Naive thymus-derived CD4-positive, alpha-beta T cell (primary cell): ENCODE measurements at regions of chr18 and their contacts with region 1.

Region 1: GRCh38 chr18:54983041-54983686 is 23.9 kb upstream of the CCDC68 start:
- DNase-seq: peak in 5 of 9 donors; percentile 20 to 40 (median 31)
- ATAC-seq: peak; percentile 74
- H3K4me3 ChIP-seq: no peak overlapping the region
- H3K4me3 Mint-ChIP-seq: no peak overlapping the region
- H3K27ac ChIP-seq: no peak overlapping the region
- H3K27ac Mint-ChIP-seq: no peak overlapping the region
- H3K4me1 ChIP-seq: no peaks in the 10 kb centered on the region
- H3K4me1 Mint-ChIP-seq: peaks cover 0 to 3% (median 0%) of the 10 kb centered on the region in 7 donors
- H3K27me3 ChIP-seq: no peaks in the 10 kb centered on the region
- H3K27me3 Mint-ChIP-seq: peaks cover 0 to 26% (median 4%) of the 10 kb centered on the region in 5 donors

Region 2: DNA sequence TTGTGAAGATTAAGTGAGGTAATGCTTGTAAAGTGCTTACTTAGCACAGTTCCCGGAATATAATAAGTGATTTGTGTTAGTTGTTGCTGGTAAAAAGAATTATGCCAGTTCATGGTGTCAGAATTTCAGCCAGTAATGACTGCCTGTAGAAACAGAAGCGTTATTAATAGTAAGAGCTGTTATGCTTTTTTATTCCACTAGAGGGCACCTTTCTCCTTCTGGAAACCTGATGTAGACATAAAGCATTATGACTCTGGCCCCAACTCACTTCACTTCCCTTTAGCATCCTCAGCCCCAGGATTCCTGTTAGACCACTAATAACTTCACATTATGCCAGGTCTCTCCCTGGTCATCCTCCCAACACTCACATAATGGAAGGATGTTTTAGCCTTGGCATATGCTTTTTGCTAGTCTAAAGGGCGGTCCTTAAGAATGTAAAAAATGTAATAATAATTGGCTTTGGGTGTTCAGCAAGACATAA is 590.6 kb before region 1 on chr18:
- CTCF ChIA-PET with region 1: no interaction called
- POLR2A ChIA-PET with region 1: no interaction called
- intact Hi-C with region 1: loop called in 1 of 2 experiments (anchors 1 kb)
- DNase-seq: peak in 7 of 9 donors; percentile 5 to 55 (median 39)
- ATAC-seq: peak; percentile 80
- H3K4me3 ChIP-seq: no peak overlapping the region
- H3K4me3 Mint-ChIP-seq: no peak overlapping the region
- H3K27ac ChIP-seq: no peak overlapping the region
- H3K27ac Mint-ChIP-seq: no peak overlapping the region
- H3K4me1 ChIP-seq: no peaks in the 10 kb centered on the region
- H3K4me1 Mint-ChIP-seq: peaks cover 0 to 37% (median 0%) of the 10 kb centered on the region in 7 donors
- H3K27me3 ChIP-seq: no peaks in the 10 kb centered on the region
- H3K27me3 Mint-ChIP-seq: peaks cover 9 to 29% (median 16%) of the 10 kb centered on the region in 5 donors

Region 3: GRCh38 chr18:54444319-54444914 is 538.7 kb before region 1 on chr18:
- CTCF ChIA-PET with region 1: no interaction called
- POLR2A ChIA-PET with region 1: no interaction called
- intact Hi-C with region 1: loop called (anchors 1 kb)
- DNase-seq: peak in 2 of 9 donors; percentile 11 to 31
- ATAC-seq: no peak
- H3K4me3 ChIP-seq: no peak overlapping the region
- H3K4me3 Mint-ChIP-seq: no peak overlapping the region
- H3K27ac ChIP-seq: no peak overlapping the region
- H3K27ac Mint-ChIP-seq: no peak overlapping the region
- H3K4me1 ChIP-seq: no peaks in the 10 kb centered on the region
- H3K4me1 Mint-ChIP-seq: no peaks in the 10 kb centered on the region
- H3K27me3 ChIP-seq: no peaks in the 10 kb centered on the region
- H3K27me3 Mint-ChIP-seq: peaks cover 12 to 50% (median 39%) of the 10 kb centered on the region in 5 donors

Region 4: DNA sequence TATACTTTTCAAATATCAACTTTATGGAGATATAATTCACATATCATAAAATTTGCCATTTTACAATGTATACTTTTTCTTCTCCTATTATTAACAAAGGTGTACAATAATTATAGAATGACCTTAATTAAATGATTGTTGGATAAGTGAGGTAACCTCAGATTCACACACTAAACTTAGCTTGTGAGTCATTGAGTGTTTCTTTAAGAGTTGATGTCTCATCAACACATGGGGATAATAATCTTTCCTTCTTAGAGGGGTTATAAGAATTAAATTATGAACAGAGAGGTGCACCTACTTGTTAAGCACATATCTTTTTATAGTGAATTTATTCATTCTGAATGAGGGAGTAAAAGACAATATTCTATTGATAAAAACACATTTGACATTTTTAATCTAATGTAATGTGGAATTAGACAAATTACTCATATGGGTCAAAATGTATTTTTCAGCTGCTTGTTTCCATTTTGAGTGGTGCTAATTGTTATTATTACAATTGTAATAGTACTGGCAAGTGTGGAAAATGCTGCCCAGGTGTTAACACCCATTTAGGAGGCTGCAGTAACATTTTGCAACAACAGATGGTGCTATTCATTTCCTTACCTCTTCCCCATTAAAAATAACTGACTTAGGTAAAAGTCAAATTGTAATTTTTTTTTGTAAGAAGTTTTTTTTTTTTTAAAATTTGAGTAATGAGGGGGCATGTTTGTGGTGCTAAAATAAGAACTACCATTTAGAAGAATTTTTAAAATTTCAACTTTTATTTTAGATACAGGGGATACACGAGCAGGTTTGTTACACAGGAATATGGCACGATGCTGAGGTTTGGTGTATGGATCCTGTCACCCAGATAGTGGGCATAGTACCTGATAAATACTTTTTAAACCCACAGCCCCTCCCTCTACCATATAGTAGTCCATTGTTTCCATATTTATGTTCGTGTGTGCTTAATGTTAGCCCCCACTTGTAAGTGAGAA is 424.3 kb before region 1 on chr18:
- CTCF ChIA-PET with region 1: interaction called, 3 read pairs
- POLR2A ChIA-PET with region 1: no interaction called
- intact Hi-C with region 1: loop called (anchors 1 kb)
- DNase-seq: peak in 3 of 9 donors; percentile 6 to 12 (median 7)
- ATAC-seq: no peak
- H3K4me3 ChIP-seq: no peak overlapping the region
- H3K4me3 Mint-ChIP-seq: no peak overlapping the region
- H3K27ac ChIP-seq: no peak overlapping the region
- H3K27ac Mint-ChIP-seq: no peak overlapping the region
- H3K4me1 ChIP-seq: no peaks in the 10 kb centered on the region
- H3K4me1 Mint-ChIP-seq: no peaks in the 10 kb centered on the region
- H3K27me3 ChIP-seq: no peaks in the 10 kb centered on the region
- H3K27me3 Mint-ChIP-seq: peaks cover 0 to 8% (median 0%) of the 10 kb centered on the region in 5 donors

Region 5: DNA sequence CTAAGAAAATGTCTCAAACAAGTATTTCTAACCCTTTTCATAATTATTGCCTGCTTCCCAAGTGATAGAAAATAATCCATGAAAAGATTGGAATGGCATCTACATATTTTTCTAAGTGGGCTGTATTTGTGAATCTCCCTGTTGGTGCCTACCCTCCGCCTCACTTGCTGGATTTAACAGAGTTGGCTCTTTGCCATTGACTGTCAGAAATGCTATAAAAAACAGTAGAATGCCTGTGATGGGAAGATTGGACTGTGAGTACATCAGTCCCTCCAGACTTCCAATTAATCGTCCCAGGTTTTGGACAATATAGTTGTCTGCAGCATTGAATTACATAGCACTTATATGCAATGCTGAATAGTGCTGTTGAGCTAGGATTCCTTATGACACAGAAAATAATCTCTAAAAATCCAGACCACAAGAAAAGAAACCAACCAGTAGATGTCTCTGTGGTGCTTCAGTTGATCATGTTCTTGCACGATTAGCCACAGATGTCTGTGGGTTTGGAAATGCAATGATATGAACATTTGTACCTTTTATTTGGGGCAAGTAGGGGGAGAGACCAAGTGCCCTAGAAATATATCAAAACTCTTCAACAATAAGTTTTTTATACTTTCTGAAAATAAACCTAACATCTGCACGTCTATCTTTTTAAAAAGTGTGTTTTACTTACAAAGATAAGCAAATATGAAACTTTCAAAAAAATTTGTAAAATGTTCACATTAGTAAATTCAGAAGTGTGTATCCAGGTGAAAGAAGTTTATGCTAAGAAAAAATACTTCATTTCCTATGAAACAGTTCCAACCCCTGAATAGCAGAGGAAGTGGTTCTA is 303.6 kb before region 1 on chr18:
- CTCF ChIA-PET with region 1: interaction called, 3 read pairs
- POLR2A ChIA-PET with region 1: no interaction called
- intact Hi-C with region 1: loop called (anchors 1 kb)
- DNase-seq: peak in 6 of 9 donors; percentile 1 to 49 (median 26)
- ATAC-seq: no peak
- H3K4me3 ChIP-seq: no peak overlapping the region
- H3K4me3 Mint-ChIP-seq: no peak overlapping the region
- H3K27ac ChIP-seq: no peak overlapping the region
- H3K27ac Mint-ChIP-seq: no peak overlapping the region
- H3K4me1 ChIP-seq: no peaks in the 10 kb centered on the region
- H3K4me1 Mint-ChIP-seq: no peaks in the 10 kb centered on the region
- H3K27me3 ChIP-seq: no peaks in the 10 kb centered on the region
- H3K27me3 Mint-ChIP-seq: peaks cover 0 to 30% (median 0%) of the 10 kb centered on the region in 5 donors

Region 6: DNA sequence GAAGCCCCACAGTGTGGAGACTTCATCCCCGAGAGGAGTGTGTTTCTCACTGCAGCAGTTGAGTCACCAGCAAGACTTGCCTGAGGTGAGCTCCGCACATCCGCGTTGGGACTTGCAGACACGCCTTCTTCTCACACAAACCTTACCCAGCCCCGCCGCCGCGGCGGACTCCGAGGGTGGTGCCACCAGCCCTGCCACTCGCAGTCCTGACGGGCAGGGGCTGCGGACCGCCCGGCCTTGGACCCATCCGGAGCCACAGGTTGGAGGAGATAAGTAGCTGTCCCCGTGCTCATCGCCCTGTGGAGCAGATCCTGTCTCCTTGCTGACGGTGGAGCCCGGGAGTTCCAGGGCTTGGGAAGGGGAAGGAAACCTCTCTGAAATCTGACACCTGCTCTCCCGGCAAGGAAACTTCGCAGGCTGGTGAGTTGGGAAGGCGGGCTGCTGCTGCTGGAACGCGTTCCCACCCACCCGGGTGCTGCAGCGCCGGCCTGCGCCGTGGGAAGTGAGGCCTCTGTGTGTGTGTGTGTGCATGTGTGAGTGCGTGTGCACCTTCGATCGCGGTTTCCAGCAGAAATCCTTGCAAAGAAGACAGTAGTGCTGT is 154.8 kb before region 1 on chr18 and contains the start of gene RAB27B:
- CTCF ChIA-PET with region 1: no interaction called
- POLR2A ChIA-PET with region 1: no interaction called
- intact Hi-C with region 1: loop called in 1 of 2 experiments (anchors 5 kb)
- DNase-seq: peak; percentile 41 to 68 (median 61)
- ATAC-seq: peak; percentile 96
- H3K4me3 ChIP-seq: peak within 1 kb of the TSS; percentile 72
- H3K4me3 Mint-ChIP-seq: peak within 1 kb of the TSS; percentile 87 to 95 (median 92)
- H3K27ac ChIP-seq: peak within 1 kb of the TSS; percentile 63
- H3K27ac Mint-ChIP-seq: peak within 1 kb of the TSS in 8 of 9 donors; percentile 60 to 87 (median 76)
- H3K4me1 ChIP-seq: no peaks in the 10 kb centered on the region
- H3K4me1 Mint-ChIP-seq: peaks cover 17 to 45% (median 24%) of the 10 kb centered on the region in 7 donors
- H3K27me3 ChIP-seq: no peaks in the 10 kb centered on the region
- H3K27me3 Mint-ChIP-seq: peaks cover 0 to 34% (median 0%) of the 10 kb centered on the region in 5 donors
- total RNA-seq, gene RAB27B: 1.3 to 6.4 (median 1.6) TPM

Region 7: GRCh38 chr18:54999016-54999415 is 15.9 kb after region 1 on chr18:
- CTCF ChIA-PET with region 1: no interaction called
- POLR2A ChIA-PET with region 1: no interaction called
- intact Hi-C with region 1: no loop called
- DNase-seq: no peak
- ATAC-seq: no peak
- H3K4me3 ChIP-seq: no peak overlapping the region
- H3K4me3 Mint-ChIP-seq: no peak overlapping the region
- H3K27ac ChIP-seq: no peak overlapping the region
- H3K27ac Mint-ChIP-seq: no peak overlapping the region
- H3K4me1 ChIP-seq: no peaks in the 10 kb centered on the region
- H3K4me1 Mint-ChIP-seq: no peaks in the 10 kb centered on the region
- H3K27me3 ChIP-seq: no peaks in the 10 kb centered on the region
- H3K27me3 Mint-ChIP-seq: peaks cover 0 to 17% (median 4%) of the 10 kb centered on the region in 5 donors

Region 8: GRCh38 chr18:55289775-55290174 is 306.6 kb after region 1 on chr18:
- CTCF ChIA-PET with region 1: no interaction called
- POLR2A ChIA-PET with region 1: no interaction called
- intact Hi-C with region 1: no loop called
- DNase-seq: no peak
- ATAC-seq: no peak
- H3K4me3 ChIP-seq: no peak overlapping the region
- H3K4me3 Mint-ChIP-seq: no peak overlapping the region
- H3K27ac ChIP-seq: no peak overlapping the region
- H3K27ac Mint-ChIP-seq: no peak overlapping the region
- H3K4me1 ChIP-seq: no peaks in the 10 kb centered on the region
- H3K4me1 Mint-ChIP-seq: peaks cover 0 to 3% (median 0%) of the 10 kb centered on the region in 7 donors
- H3K27me3 ChIP-seq: no peaks in the 10 kb centered on the region
- H3K27me3 Mint-ChIP-seq: no peaks in the 10 kb centered on the region

Region 9: DNA sequence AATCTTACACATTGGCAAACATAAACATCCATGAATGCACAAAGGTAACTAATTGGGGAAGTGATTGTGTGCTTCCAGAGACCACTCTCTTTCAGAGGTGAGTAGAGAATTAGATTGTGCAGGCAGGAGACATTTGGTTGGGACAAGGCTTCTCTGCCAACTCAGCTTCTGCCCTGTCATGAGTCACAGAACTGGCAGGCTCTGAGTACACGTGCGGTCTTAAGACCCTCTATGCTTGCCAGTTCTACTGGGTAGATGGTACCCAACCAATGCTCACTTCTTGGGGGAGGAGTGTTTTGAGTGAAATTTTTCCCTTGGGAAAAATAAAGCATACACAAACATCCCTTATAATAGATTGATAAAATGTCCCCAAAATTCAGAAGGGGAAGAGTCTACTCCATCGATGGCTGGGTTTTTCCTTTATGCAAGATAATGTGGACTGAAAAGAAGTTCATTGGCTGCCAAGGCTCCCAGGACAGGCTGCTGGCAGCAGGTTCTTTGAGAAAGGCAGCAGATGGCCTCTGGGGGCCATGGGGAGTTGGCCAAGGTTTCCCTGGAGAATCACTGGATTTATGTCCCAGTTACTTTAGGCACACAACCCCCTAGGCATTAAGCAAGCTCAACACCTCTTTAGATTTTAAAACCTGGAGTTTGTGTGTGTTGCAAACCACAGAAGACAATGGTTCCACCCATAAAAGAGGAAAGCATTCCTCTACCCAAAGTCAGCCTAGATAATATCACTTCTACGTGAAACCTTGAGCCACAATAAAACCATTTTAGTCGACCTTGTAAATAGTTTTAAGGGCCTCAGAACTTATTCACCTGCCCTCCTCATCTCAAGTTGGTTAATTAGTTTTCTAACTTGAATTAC is 1238.3 kb after region 1 on chr18:
- CTCF ChIA-PET with region 1: no interaction called
- POLR2A ChIA-PET with region 1: no interaction called
- intact Hi-C with region 1: no loop called
- DNase-seq: no peak
- ATAC-seq: no peak
- H3K4me3 ChIP-seq: no peak overlapping the region
- H3K4me3 Mint-ChIP-seq: no peak overlapping the region
- H3K27ac ChIP-seq: no peak overlapping the region
- H3K27ac Mint-ChIP-seq: no peak overlapping the region
- H3K4me1 ChIP-seq: no peaks in the 10 kb centered on the region
- H3K4me1 Mint-ChIP-seq: no peaks in the 10 kb centered on the region
- H3K27me3 ChIP-seq: no peaks in the 10 kb centered on the region
- H3K27me3 Mint-ChIP-seq: peaks cover 0 to 3% (median 0%) of the 10 kb centered on the region in 5 donors